A549 (cell line): ENCODE measurements at regions of chr12 and their contacts with region 1.

Region 1: DNA sequence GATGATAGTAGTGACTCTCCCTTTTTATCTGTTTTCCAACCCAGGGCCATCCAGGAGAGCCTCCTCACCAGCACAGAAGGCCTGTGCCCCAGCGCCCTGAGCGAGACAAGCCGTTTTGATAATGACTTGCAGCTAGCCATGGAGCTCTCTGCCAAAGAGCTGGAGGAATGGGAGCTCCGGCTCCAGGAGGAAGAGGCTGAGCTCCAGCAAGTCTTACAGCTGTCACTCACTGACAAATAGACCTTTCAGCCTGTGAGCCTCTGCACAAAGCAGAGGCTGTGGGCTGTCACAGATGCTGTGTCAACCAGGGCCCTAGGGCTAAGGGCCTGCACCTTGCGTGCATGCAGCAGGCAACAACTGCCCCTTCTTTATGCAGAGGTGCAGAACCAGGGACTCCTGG is 11.0 kb downstream of the C12orf76 start:
- DNase-seq: no peak
- ATAC-seq: no peak
- H3K4me3 ChIP-seq: no peak overlapping the region
- H3K27ac ChIP-seq: peak overlapping the region; percentile 90 to 93
- H3K4me1 ChIP-seq: peaks cover 53% of the 10 kb centered on the region
- CTCF ChIP-seq: no peak
- EP300 ChIP-seq: no peak
- POLR2A ChIP-seq: no peak
- RAD21 ChIP-seq: no peak

Region 2: DNA sequence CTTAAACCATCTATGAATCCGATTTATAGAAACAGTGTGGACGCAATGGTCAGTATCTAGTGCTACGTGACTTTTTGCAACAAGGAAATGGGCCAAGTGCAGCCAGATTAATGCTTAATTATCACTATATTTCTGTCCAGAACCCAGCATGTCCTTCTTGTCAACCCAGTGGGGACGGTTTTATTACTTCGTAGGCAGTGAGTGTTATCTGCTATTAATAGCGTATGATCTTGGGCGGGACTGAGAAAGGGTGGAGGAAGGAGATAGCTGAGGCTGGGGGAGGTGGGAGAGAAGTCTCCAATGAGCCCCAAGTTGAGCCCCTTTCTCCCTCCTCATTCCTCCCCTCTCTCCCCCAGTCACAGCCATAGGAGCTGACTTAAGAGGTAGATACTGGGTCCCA is 383.4 kb before region 1 on chr12:
- CTCF ChIA-PET with region 1: no interaction called
- POLR2A ChIA-PET with region 1: no interaction called
- DNase-seq: no peak
- ATAC-seq: no peak
- H3K4me3 ChIP-seq: no peak overlapping the region
- H3K27ac ChIP-seq: no peak overlapping the region
- H3K4me1 ChIP-seq: peaks cover 6% of the 10 kb centered on the region; the same call in 1 of the 3 replicates
- CTCF ChIP-seq: no peak
- EP300 ChIP-seq: no peak
- POLR2A ChIP-seq: no peak
- RAD21 ChIP-seq: no peak

Region 3: DNA sequence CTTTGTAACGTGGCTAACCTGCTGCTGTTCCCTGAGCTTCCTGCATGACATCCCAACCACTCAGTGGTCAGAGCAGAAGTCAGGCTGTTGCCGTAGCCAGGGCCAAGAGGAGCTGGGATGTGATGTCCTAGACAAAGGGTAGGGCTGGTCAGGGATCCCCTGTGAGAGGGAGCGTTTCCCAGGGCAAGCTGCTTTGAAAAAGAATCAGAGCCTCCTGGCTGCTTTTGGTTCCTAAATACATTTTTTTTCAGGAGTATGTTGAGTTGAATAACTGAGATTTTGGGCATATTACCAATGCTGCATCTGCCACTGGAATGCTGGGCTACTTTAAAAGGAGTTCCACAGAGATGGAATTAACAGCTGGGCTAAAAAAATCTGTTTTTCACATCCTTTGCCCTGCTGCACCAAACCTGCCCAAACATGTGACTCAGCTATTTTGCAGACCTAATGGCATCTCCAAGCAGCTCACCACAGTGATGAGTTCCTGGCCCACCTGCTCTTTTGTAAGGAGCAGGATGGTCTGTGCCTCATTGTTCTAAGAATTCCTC is 14.2 kb before region 1 on chr12:
- CTCF ChIA-PET with region 1: interaction called, 34 read pairs
- POLR2A ChIA-PET with region 1: no interaction called
- DNase-seq: no peak
- ATAC-seq: peak in 1 of 2 experiments; percentile 18; a peak in 1 of 6 replicates
- H3K4me3 ChIP-seq: no peak overlapping the region
- H3K27ac ChIP-seq: peak overlapping the region; percentile 23 to 64; a peak in 4 of 6 replicates
- H3K4me1 ChIP-seq: peaks cover 31% of the 10 kb centered on the region
- CTCF ChIP-seq: no peak
- EP300 ChIP-seq: no peak
- POLR2A ChIP-seq: no peak
- RAD21 ChIP-seq: no peak